ENCODE measurements at regions of chr10 and their contacts with region 1.

Region 1: GRCh38 chr10:28334296-28334695 is 31.4 kb upstream of the MPP7 start:
- DNase-seq: peak; percentile 44
- H3K4me3 Mint-ChIP-seq: peak overlapping the region; percentile 78
- H3K27ac Mint-ChIP-seq: peak overlapping the region; percentile 99
- H3K4me1 Mint-ChIP-seq: peaks cover 54% of the 10 kb centered on the region
- H3K27me3 Mint-ChIP-seq: no peaks in the 10 kb centered on the region

Region 2: GRCh38 chr10:26437637-26438461 is 1896.4 kb before region 1 on chr10 and contains the start of gene APBB1IP:
- CTCF ChIA-PET with region 1: no interaction called
- POLR2A ChIA-PET with region 1: no interaction called
- intact Hi-C with region 1: loop called (anchors 5 kb)
- DNase-seq: peak; percentile 66
- H3K4me3 Mint-ChIP-seq: peak within 1 kb of the TSS; percentile 93
- H3K27ac Mint-ChIP-seq: peak within 1 kb of the TSS; percentile 92
- H3K4me1 Mint-ChIP-seq: peaks cover 51% of the 10 kb centered on the region
- H3K27me3 Mint-ChIP-seq: no peaks in the 10 kb centered on the region
- total RNA-seq, gene APBB1IP: 50.1 to 52.1 TPM

Region 3: GRCh38 chr10:27504007-27504807 is 830.1 kb before region 1 on chr10 and contains the start of gene RAB18:
- CTCF ChIA-PET with region 1: no interaction called
- POLR2A ChIA-PET with region 1: interaction called, 3 read pairs
- intact Hi-C with region 1: loop called (anchors 1 kb)
- DNase-seq: peak; percentile 99
- H3K4me3 Mint-ChIP-seq: peak within 1 kb of the TSS; percentile 100
- H3K27ac Mint-ChIP-seq: peak within 1 kb of the TSS; percentile 96
- H3K4me1 Mint-ChIP-seq: peaks cover 51% of the 10 kb centered on the region
- H3K27me3 Mint-ChIP-seq: no peaks in the 10 kb centered on the region
- total RNA-seq, gene RAB18: 51.7 to 54.0 TPM

Region 4: DNA sequence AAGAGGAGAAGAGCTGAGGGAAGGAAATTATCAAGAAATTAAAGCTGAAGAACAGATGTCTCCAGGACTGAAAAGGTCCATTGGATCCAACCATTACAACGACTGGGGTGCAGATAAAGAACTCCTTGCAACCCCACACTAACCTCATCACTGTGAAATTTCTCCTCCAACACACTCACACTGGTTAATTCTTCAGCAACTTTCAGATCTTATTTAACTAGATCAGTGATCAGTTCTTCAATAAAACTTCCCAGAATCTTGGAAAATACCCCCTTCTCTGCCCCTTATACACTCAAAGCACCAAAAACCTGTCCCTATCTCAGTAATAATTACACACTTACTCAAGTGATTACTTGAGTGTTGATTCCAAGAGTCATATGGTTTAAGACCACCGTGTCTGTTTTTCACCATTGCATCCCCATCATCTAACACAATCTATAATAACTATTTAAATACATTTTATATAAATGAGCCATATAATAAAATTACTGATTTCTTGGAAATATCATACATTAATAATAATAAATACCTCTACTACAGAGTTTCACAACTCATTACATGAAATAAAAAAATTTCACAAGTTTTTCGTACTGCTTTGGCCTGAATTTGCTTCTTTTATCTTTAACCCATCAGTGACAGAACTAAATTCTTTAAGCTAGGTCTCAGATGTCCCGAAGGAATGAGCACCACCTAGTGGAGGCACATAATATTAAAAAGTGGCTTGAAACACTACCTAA is 155.1 kb before region 1 on chr10:
- CTCF ChIA-PET with region 1: interaction called, 3 read pairs
- POLR2A ChIA-PET with region 1: no interaction called
- intact Hi-C with region 1: loop called (anchors 2 kb)
- DNase-seq: peak; percentile 22
- H3K4me3 Mint-ChIP-seq: no peak overlapping the region
- H3K27ac Mint-ChIP-seq: peak overlapping the region; percentile 72
- H3K4me1 Mint-ChIP-seq: peaks cover 37% of the 10 kb centered on the region
- H3K27me3 Mint-ChIP-seq: no peaks in the 10 kb centered on the region

Region 5: DNA sequence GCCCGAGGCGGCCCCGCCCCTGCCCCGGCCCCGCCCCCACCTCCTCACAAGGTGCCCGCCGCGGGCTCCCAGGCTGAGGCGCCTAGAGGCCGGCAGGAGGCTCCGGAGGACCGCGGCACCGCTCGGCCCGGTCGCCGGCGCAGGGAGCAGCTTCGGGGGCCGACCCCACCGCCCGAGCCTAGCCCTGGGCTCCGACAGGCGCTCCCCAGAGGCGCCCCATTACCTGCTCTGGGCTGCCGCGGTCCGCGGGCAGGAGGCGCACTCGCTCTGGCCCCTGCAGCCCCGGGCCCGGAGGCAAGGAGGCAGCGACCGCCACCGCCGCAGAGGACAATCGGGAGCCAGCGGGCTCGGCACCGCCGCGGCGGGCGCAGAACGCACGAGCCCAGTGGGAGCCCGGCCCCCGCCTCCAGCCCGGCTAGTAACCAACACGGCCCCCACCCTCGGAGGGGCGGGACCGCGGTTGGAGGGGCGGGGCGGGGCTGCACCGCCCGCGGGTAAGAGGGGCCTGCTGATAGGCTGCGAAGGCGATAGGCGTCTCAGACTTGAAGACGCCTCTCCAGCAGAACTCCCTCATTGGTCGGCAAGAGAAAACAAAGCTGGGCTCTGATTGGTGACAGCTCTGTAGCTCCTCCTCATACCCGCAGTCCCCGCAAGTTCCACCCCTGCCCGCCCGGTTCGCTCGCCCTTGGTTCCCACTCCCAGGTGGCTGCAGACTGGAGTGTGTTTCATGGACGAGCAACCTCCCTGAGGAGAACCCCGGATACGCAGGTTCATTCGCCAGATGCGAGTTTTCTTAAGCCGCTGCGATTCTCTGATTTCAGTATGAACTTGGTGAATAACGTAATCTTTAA is 31.4 kb before region 1 on chr10 and contains the start of gene MPP7:
- CTCF ChIA-PET with region 1: interaction called, 77 read pairs
- POLR2A ChIA-PET with region 1: interaction called, 50 read pairs
- intact Hi-C with region 1: loop called (anchors 1 kb)
- DNase-seq: peak; percentile 97
- H3K4me3 Mint-ChIP-seq: peak within 1 kb of the TSS; percentile 90
- H3K27ac Mint-ChIP-seq: peak within 1 kb of the TSS; percentile 71
- H3K4me1 Mint-ChIP-seq: peaks cover 46% of the 10 kb centered on the region
- H3K27me3 Mint-ChIP-seq: no peaks in the 10 kb centered on the region
- total RNA-seq, gene MPP7: 11.6 to 12.8 TPM

Region 6: DNA sequence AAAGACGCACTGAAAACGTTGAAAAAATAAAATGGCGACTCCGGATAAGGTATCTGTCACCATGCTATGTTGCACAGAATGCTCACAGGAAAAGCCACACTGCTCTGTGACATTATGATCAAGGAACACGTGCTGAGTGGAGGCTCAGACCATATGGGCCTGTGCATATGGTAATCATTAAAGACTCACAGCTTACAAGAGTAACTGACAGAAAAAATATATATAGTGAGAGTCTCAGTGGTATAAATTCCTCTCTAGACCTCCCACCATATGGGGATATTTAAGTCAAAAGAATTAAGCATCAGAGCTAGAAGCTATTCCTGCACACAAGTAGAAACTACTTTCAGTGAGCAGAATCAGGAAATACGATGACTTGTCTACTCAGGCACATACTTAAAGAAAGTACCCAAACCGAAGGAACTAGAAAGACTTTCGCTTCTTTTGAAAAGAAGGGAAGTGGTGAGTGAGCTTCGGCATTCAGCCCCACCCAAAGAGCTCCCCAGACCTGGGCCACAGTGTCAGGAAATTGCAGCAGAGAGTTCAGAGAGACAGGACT is 33.7 kb after region 1 on chr10:
- CTCF ChIA-PET with region 1: interaction called, 9 read pairs
- POLR2A ChIA-PET with region 1: interaction called, 57 read pairs
- intact Hi-C with region 1: loop called (anchors 1 kb)
- DNase-seq: peak; percentile 76
- H3K4me3 Mint-ChIP-seq: peak overlapping the region; percentile 45
- H3K27ac Mint-ChIP-seq: peak overlapping the region; percentile 86
- H3K4me1 Mint-ChIP-seq: peaks cover 45% of the 10 kb centered on the region
- H3K27me3 Mint-ChIP-seq: no peaks in the 10 kb centered on the region

Region 7: DNA sequence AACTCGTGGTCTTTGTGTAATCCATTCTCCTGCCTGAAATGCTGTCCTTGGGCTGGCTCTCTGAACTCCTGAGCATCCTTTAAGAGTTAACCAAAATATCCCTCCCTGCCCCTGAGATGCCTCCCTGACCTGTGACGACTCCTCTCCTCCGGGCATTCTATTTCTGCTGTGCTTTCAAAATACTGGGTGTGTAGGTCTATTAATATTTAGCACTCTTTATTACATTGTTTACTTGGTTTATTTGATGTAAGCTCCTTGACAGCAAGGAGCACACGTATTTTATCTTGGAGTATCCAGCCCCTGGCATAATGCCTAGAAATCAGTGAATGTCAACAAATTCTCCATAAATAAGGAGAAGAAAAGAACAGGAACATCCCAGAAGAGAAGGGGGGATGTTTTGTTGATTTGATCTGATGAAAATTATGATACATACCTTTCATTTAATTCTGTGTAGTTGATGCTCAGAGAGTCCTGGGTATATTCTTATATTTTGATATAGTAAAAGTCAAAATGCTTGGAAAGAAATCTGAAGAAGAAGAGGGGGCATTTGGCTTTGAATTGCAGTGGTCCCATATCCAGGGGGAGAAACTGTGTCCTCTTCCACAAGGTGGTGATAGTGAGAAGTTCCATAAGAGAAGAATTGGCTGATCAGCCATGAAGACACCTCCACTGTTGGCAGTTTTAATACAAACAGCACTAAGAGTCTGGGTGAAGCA is 76.3 kb after region 1 on chr10:
- CTCF ChIA-PET with region 1: no interaction called
- POLR2A ChIA-PET with region 1: no interaction called
- intact Hi-C with region 1: loop called (anchors 1 kb)
- DNase-seq: no peak
- H3K4me3 Mint-ChIP-seq: no peak overlapping the region
- H3K27ac Mint-ChIP-seq: no peak overlapping the region
- H3K4me1 Mint-ChIP-seq: peaks cover 10% of the 10 kb centered on the region
- H3K27me3 Mint-ChIP-seq: peaks cover 14% of the 10 kb centered on the region